ENCODE measurements at regions of chr15 and their contacts with region 1.

Region 1: DNA sequence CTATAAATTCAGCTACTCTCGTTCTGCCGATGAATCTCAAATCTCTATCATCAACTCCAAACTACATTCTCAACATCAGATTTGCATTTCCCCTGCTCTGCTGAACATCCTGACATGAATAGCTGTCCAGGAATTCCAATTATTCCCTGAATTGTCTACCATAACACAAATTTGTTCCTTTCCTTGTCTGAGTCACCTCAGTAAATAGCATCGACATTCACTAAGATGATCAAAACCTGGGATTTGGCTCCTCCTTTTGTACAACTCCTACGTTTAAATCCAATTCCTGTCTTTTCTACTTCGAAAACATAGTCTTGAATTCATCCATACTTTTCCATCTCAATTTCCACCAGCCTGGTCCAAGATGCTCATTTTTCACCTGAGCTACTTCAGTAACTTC is 107.0 kb downstream of the GREM1 start:
- DNase-seq: no peak
- ATAC-seq: no peak
- H3K4me3 ChIP-seq: no peak overlapping the region
- H3K27ac ChIP-seq: no peak overlapping the region
- H3K4me1 ChIP-seq: no peaks in the 10 kb centered on the region
- H3K27me3 ChIP-seq: no peaks in the 10 kb centered on the region
- CTCF ChIP-seq: no peak

Region 2: GRCh38 chr15:32774022-32774421 is 50.8 kb before region 1 on chr15:
- intact Hi-C with region 1: loop called in 1 of 2 experiments (anchors 5 kb)
- DNase-seq: no peak
- ATAC-seq: no peak
- H3K4me3 ChIP-seq: no peak overlapping the region
- H3K27ac ChIP-seq: no peak overlapping the region
- H3K4me1 ChIP-seq: no peaks in the 10 kb centered on the region
- H3K27me3 ChIP-seq: no peaks in the 10 kb centered on the region
- CTCF ChIP-seq: no peak

Region 3: DNA sequence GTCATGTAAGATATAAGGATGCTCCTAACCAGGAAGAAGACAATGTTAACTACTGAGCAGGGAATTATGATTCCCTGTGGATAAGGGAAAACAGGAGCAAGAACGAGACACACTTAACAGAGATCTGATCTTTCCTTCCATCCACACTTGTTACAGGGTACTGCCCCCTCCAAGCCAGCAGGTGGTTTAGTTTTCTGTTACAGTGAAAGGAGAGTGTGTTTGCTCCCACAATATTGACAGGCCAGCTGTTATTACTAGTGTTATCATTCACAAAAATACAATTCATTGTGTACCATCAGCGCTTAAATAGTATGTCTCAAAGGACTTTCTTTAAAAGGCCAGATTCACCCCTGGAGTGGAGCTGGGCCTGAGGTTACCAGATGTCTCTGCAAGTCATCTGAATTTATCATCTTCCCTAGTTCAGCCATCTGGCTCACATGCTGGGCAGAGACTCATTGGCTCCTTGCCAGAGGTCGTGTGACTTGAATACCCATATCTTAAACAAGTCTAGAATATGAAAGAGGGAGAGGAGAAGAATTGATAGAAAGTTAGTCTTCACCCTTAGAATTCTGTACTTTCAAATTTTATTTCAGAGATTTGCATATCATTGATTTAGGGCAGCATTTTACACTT is 386.5 kb after region 1 on chr15:
- intact Hi-C with region 1: no loop called
- DNase-seq: no peak
- ATAC-seq: peak in 2 of 4 donors; percentile 44 to 54
- H3K4me3 ChIP-seq: no peak overlapping the region
- H3K27ac ChIP-seq: no peak overlapping the region
- H3K4me1 ChIP-seq: peaks cover 2% of the 10 kb centered on the region
- H3K27me3 ChIP-seq: peaks cover 0 to 2% (median 0%) of the 10 kb centered on the region in 3 donors
- CTCF ChIP-seq: no peak

Measured in psoas muscle (tissue), 8 donors.